ENCODE measurements at regions of chr6 and their contacts with region 1.

Region 1: DNA sequence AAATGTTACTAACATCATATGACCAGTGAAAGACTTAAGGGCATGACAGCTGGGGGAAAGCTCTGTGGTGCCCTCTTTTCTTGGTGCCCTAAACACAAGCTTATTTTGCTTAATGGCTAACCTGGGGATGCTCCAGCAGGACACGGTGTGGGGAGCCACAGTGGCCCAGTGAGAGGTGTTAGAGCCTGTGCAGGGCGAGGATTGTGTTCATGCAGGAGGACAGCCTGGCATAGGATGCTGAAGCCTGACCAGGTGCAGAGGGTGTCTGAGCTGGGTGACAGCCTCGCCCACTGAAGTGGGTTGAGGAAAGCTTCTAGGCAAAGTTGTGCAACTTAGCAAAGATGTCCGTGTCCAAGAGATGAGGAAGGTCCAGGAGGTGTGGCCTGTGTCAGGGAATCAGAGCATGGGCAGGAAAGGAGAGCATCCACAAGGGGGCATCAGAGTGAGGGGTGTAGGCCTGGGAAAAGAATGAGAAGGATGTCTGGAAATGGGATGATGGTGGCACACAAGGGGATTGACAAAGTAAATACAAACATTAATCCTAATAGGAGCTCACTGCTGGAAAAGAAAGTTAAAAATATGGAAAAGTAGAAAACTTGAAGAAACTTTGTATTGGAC is 33.9 kb downstream of the SLC17A4 start:
- DNase-seq: peak; percentile 7
- H3K4me3 ChIP-seq: no peak overlapping the region
- CTCF ChIP-seq: peak; percentile 65

Region 2: GRCh38 chr6:25804804-25805203 is 16.4 kb after region 1 on chr6:
- CTCF ChIA-PET with region 1: interaction called, 12 read pairs
- POLR2A ChIA-PET with region 1: no interaction called
- DNase-seq: no peak
- H3K4me3 ChIP-seq: no peak overlapping the region
- CTCF ChIP-seq: no peak

Region 3: DNA sequence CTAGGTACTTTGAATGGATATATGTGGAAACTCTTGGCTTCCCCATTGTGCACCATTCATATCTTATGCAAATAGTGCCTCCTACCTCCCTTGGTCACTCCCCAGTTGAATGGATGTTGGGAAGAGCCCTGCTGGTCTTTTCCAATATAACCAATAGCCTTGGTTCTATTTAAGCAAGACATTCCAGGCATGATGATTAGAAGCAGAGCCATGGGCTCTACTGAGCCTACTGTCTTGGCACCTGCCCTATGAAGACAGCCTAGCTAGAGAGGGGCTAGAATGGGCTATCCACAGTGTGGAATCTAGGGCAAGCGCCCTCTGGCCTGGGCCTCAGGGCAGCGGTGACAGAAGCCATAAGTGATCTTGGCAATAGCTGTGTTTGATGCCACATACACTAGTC is 27.8 kb after region 1 on chr6:
- CTCF ChIA-PET with region 1: no interaction called
- POLR2A ChIA-PET with region 1: no interaction called
- DNase-seq: no peak
- H3K4me3 ChIP-seq: no peak overlapping the region
- CTCF ChIP-seq: no peak

Region 4: DNA sequence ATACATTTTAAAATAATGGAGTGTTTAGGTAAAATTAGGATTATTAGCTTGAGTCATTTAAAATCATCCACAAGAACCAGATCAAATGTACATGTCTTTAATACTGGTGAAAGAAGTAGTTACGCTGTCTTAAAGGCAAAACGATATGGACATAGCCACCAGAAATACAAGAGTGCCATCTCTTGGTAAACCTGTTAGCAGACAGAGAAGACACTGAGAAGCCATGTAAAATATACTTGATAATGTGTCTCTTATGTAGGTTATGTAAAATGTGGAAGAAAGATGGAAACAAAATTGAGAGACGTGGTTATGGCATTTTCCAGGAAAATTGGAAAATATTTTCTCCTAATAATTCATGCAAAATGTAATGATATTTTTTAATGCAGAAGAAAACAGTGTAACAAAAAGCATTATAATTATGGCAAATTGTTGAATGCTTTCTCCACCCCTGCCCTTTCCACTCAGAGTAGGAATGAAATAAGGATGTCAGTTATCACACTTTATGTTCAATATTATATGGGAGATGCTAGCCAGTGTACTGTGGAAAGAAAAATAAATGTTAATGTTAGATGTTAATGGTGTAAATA is 154.2 kb after region 1 on chr6:
- CTCF ChIA-PET with region 1: interaction called, 36 read pairs
- POLR2A ChIA-PET with region 1: no interaction called
- DNase-seq: peak; percentile 16
- H3K4me3 ChIP-seq: no peak overlapping the region
- CTCF ChIP-seq: peak; percentile 19

Measured in AG04449 (cell line).